Adrenal gland (tissue), 19 donors: ENCODE measurements at regions of chr11 and their contacts with region 1.

Region 1: GRCh38 chr11:14290422-14290821 is 68.6 kb downstream of the RRAS2 start:
- DNase-seq: no peak
- H3K4me3 ChIP-seq: no peak overlapping the region
- H3K27ac ChIP-seq: no peak overlapping the region
- H3K4me1 ChIP-seq: no peaks in the 10 kb centered on the region
- H3K27me3 ChIP-seq: no peaks in the 10 kb centered on the region
- CTCF ChIP-seq: no peak
- POLR2A ChIP-seq: no peak

Region 2: GRCh38 chr11:14454861-14455632 is 164.6 kb after region 1 on chr11:
- intact Hi-C with region 1: loop called in 1 of 2 experiments (anchors 10 kb)
- DNase-seq: peak; percentile 24 to 61 (median 47)
- H3K4me3 ChIP-seq: no peak overlapping the region
- H3K27ac ChIP-seq: peak overlapping the region in 1 of 5 donors; percentile 37
- H3K4me1 ChIP-seq: no peaks in the 10 kb centered on the region
- H3K27me3 ChIP-seq: no peaks in the 10 kb centered on the region
- CTCF ChIP-seq: peak; percentile 27 to 77 (median 59)
- POLR2A ChIP-seq: no peak